ENCODE measurements at regions of chr2 and their contacts with region 1.

Region 1: GRCh38 chr2:55159037-55159651 is 72.9 kb downstream of the CLHC1 start:
- DNase-seq: peak; percentile 73 to 87 (median 75)
- ATAC-seq: peak; percentile 70 to 82 (median 76)
- H3K4me3 ChIP-seq: no peak overlapping the region
- H3K27ac ChIP-seq: peak overlapping the region in 7 of 12 donors; percentile 33 to 74 (median 47)
- H3K4me1 ChIP-seq: peaks cover 0 to 80% (median 42%) of the 10 kb centered on the region in 12 donors
- H3K27me3 ChIP-seq: no peaks in the 10 kb centered on the region
- CTCF ChIP-seq: no peak
- POLR2A ChIP-seq: no peak

Region 2: GRCh38 chr2:54015798-54016699 is 1143.1 kb before region 1 on chr2:
- intact Hi-C with region 1: no loop called
- DNase-seq: no peak
- ATAC-seq: peak in 3 of 4 donors; percentile 62 to 78 (median 63)
- H3K4me3 ChIP-seq: no peak overlapping the region
- H3K27ac ChIP-seq: peak overlapping the region in 3 of 12 donors; percentile 10 to 68 (median 11)
- H3K4me1 ChIP-seq: peaks cover 0 to 9% (median 2%) of the 10 kb centered on the region in 12 donors
- H3K27me3 ChIP-seq: no peaks in the 10 kb centered on the region
- CTCF ChIP-seq: no peak
- POLR2A ChIP-seq: no peak

Region 3: DNA sequence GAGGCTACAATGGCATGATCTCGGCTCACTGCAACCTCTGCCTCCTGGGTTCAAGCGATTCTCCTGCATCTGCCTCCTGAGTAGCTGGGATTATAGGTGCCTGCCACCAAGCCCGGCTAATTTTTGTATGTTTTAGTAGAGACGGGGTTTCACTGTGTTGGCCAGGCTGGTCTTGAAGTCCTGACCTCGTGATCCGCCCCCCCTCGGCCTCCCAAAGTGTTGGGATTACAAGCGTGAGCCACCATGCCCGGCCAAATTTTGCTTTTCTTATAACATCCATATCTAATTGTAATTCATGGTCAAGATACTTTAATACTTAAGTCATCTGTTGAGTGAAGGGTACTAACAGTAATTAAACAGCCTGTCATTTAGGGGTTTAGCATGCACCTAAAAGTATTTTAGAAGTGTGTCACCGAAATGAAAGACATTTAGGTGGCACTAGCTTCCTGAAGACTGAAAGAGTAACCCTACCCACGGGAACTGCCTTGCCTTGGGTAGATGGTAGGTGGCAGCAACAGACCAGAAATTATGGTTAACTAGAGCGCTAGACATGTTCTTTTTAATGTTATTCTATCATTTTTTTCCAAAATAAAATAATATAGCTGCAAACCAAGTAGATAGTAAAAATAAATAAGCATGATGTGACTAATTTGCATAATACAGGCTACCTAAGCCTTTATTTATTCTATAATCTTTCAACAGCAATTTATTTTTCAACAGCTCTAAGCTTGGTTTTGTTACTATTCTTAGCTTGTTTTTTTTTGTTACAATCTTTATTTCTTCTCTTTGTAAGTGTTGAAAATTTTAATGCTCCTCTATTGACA is 1052.3 kb before region 1 on chr2:
- intact Hi-C with region 1: loop called in 1 of 10 experiments (anchors 5 kb)
- DNase-seq: no peak
- ATAC-seq: peak in 3 of 4 donors; percentile 59 to 80 (median 75)
- H3K4me3 ChIP-seq: no peak overlapping the region
- H3K27ac ChIP-seq: no peak overlapping the region
- H3K4me1 ChIP-seq: peaks cover 0 to 8% (median 5%) of the 10 kb centered on the region in 12 donors
- H3K27me3 ChIP-seq: no peaks in the 10 kb centered on the region
- CTCF ChIP-seq: peak; percentile 43 to 78 (median 62)
- POLR2A ChIP-seq: no peak

Region 4: GRCh38 chr2:55099878-55100820 is 59.0 kb before region 1 on chr2:
- intact Hi-C with region 1: loop called in 1 of 10 experiments (anchors 10 kb)
- DNase-seq: no peak
- ATAC-seq: peak; percentile 30 to 69 (median 63)
- H3K4me3 ChIP-seq: peak overlapping the region in 2 of 12 donors; percentile 11 to 13
- H3K27ac ChIP-seq: peak overlapping the region; percentile 45 to 90 (median 71)
- H3K4me1 ChIP-seq: peaks cover 0 to 62% (median 43%) of the 10 kb centered on the region in 12 donors
- H3K27me3 ChIP-seq: no peaks in the 10 kb centered on the region
- CTCF ChIP-seq: no peak
- POLR2A ChIP-seq: no peak

Region 5: DNA sequence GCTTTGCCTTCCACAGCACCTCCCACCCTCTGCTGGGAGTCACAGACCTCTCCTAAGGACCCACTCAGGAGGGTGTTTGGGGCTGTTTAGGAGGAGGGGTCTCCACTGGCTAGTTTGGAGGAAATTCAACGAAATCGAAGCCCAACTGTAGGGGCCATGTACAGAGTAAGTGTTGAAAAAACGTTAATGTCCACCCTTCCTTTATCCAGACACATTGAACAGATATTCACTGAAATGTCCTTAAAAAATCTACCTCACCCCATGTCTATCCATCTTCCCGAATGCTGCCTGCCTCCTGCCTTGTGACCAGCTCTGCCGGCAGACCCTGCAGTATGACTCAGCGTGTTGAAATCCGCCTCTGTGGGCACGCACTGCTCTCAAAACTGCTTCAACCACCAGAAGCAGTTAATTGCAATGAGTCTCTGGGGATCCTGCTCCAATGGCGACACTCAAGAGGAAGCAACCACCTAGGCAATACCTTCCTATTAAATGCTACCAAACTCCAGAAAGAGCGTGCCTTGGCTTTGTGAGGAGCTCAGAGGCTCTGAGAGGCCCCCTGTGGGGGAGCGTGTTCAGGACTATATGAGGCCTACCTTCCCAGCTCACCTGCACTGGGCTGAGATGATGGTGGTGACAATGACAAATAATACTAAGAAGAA is 47.4 kb before region 1 on chr2:
- intact Hi-C with region 1: loop called in 5 of 10 experiments (anchors 5 kb)
- DNase-seq: peak; percentile 39 to 71 (median 62)
- ATAC-seq: peak in 3 of 4 donors; percentile 70 to 82 (median 73)
- H3K4me3 ChIP-seq: peak overlapping the region in 2 of 12 donors; percentile 2 to 19
- H3K27ac ChIP-seq: peak overlapping the region; percentile 47 to 95 (median 80)
- H3K4me1 ChIP-seq: peaks cover 0 to 44% (median 29%) of the 10 kb centered on the region in 12 donors
- H3K27me3 ChIP-seq: no peaks in the 10 kb centered on the region
- CTCF ChIP-seq: no peak
- POLR2A ChIP-seq: no peak

Region 6: GRCh38 chr2:55204950-55205349 is 45.8 kb after region 1 on chr2:
- intact Hi-C with region 1: no loop called
- DNase-seq: no peak
- ATAC-seq: no peak
- H3K4me3 ChIP-seq: no peak overlapping the region
- H3K27ac ChIP-seq: no peak overlapping the region
- H3K4me1 ChIP-seq: no peaks in the 10 kb centered on the region
- H3K27me3 ChIP-seq: no peaks in the 10 kb centered on the region
- CTCF ChIP-seq: no peak
- POLR2A ChIP-seq: no peak

Region 7: DNA sequence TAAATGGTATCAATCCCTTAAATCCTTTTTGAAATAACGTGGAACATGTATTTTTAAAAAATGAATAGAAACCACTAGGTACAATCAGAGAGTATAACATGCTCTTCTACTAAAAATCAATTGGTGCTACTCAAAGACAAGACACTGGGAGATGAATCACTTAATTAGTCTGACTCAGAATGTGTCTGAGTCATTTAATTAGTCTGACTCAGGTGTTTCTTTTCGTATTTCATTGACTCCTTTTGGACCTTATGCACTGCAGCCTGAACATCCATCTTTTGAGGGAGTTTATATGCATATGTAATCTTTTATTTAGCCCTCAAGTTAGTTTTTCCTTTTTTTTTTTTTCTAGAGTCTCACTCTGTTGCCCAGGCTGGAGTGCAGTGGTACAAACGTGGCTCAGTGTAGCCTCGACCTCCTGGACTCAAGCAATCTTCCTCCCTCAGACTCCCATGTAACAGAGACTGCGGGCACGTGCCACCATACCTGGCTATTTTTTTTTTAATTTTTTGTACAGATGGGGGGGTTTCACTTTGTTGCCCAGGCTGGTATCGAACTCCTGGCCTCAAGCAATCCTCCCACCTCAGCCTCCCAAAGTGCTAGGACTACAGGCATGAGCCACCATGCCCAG is 431.8 kb after region 1 on chr2:
- intact Hi-C with region 1: no loop called
- DNase-seq: no peak
- ATAC-seq: no peak
- H3K4me3 ChIP-seq: no peak overlapping the region
- H3K27ac ChIP-seq: no peak overlapping the region
- H3K4me1 ChIP-seq: peaks cover 0 to 18% (median 0%) of the 10 kb centered on the region in 12 donors
- H3K27me3 ChIP-seq: no peaks in the 10 kb centered on the region
- CTCF ChIP-seq: no peak
- POLR2A ChIP-seq: no peak